Dorsolateral prefrontal cortex (tissue), 120 donors: ENCODE measurements at regions of chr17 and their contacts with region 1.

Region 1: GRCh38 chr17:27654654-27655524 is 23.9 kb downstream of the LGALS9 start:
- DNase-seq: peak; percentile 60 to 82 (median 68)
- H3K4me3 ChIP-seq: no peak overlapping the region
- H3K27ac ChIP-seq: no peak overlapping the region
- H3K27me3 ChIP-seq: no peaks in the 10 kb centered on the region
- CTCF ChIP-seq: peak; percentile 76 to 98 (median 94)

Region 2: DNA sequence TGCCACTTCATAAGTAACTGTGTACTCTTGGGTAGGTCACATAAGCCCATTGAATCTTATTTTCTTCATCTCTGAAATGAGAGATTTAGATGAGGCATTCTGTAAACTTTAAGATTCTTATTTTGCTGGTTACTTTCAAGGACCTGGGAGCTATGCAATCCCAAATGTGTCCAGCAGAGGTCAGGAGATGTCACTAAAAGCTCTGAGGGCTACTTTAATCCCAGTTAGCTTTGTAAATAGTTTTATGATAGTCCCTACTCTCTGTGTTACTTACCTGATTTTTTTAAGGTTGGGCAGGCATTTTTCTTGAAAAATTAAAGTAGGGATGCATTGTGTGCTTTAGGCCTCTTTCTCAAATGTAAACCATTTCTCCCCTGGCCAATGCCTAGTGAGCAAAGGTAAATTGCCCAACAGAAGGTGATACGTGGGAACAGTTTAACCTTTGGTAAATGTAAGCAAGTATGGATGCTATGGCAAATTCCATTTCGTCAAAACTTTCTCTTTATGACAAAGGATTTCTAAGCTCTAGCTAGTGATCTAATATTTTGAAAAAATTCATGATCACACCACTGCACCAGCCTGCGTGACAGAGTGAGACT is 418.1 kb before region 1 on chr17:
- intact Hi-C with region 1: loop called in 1 of 2 experiments (anchors 5 kb)
- DNase-seq: peak in 8 of 10 donors; percentile 34 to 88 (median 68)
- H3K4me3 ChIP-seq: no peak overlapping the region
- H3K27ac ChIP-seq: no peak overlapping the region
- H3K27me3 ChIP-seq: no peaks in the 10 kb centered on the region
- CTCF ChIP-seq: peak; percentile 84 to 99 (median 95)

Region 3: DNA sequence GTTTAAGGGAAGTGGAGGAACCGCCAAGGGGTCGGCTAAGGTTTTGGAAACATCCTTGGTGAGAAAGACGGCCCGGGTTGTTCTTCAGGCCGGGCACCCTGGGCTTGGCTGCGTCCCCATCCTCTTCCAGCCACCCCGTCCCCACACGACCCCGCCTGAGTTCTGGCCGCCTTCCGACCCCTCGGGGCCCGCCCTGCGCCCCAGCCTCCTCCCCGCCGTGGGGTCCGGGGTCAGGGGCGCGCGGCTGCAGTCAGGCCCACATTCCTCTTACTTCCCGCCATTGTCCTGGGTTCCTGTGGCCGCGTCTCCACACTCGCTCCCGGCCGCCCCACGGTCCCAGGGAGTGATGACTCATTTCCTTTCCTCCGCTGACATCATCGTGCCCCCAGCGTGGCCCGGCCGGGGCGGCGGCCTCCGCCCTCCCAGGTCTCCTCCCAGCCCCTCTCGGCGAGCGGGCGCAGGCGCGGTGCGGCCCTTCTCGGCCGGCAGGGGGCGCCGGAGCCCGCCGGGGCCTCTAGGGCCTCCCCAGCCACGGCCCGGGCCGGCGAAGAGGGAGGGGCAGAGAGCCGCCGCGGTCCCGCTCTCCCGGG is 301.3 kb before region 1 on chr17:
- intact Hi-C with region 1: loop called in 1 of 2 experiments (anchors 5 kb)
- DNase-seq: peak; percentile 62 to 90 (median 78)
- H3K4me3 ChIP-seq: peak overlapping the region; percentile 51 to 89 (median 73)
- H3K27ac ChIP-seq: peak overlapping the region; percentile 37 to 98 (median 91)
- H3K27me3 ChIP-seq: no peaks in the 10 kb centered on the region
- CTCF ChIP-seq: peak; percentile 38 to 99 (median 87)

Region 4: GRCh38 chr17:27609611-27610303 is 45.1 kb before region 1 on chr17:
- intact Hi-C with region 1: loop called (anchors 1 to 2 kb)
- DNase-seq: peak in 6 of 10 donors; percentile 27 to 72 (median 62)
- H3K4me3 ChIP-seq: peak overlapping the region in 30 of 59 donors; percentile 0 to 47 (median 18)
- H3K27ac ChIP-seq: peak overlapping the region in 25 of 59 donors; percentile 1 to 76 (median 40)
- H3K27me3 ChIP-seq: no peaks in the 10 kb centered on the region
- CTCF ChIP-seq: peak in 55 of 56 donors; percentile 30 to 77 (median 65)

Region 5: GRCh38 chr17:27760069-27760885 is 105.4 kb after region 1 on chr17:
- intact Hi-C with region 1: loop called (anchors 2 kb)
- DNase-seq: peak in 8 of 10 donors; percentile 57 to 79 (median 72)
- H3K4me3 ChIP-seq: no peak overlapping the region
- H3K27ac ChIP-seq: no peak overlapping the region
- H3K27me3 ChIP-seq: no peaks in the 10 kb centered on the region
- CTCF ChIP-seq: peak; percentile 64 to 97 (median 92)

Region 6: DNA sequence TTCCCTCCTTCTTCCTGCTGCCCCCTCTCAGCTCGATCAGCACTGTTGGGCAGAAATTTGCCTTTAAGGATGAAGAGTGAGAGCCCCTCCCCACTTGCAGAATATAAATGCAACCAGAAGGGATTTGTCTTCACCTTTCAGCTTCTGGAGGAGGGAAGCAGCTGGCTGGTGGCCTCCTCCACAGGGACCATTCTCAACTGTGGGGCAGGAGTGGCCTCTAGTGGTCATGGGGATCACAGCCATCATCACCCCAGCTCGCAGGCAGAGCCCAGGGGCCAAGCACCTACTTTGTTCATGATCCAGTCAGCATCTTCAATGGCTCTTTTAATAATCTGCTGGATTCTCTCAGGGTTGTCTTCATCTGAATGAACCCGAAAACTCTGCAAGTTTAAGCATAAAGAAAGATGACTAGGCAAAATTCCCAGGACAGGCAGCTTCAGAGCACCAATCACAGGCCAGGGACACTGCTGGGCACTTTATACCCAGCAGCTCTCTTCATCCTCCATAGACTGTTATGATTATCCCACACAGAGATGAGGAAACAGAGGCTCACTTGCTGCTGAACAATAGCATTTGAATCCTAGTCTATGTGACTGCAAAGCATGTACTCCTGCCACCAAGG is 225.2 kb after region 1 on chr17:
- intact Hi-C with region 1: loop called (anchors 2 to 10 kb)
- DNase-seq: peak; percentile 68 to 86 (median 80)
- H3K4me3 ChIP-seq: no peak overlapping the region
- H3K27ac ChIP-seq: peak overlapping the region in 54 of 59 donors; percentile 24 to 87 (median 70)
- H3K27me3 ChIP-seq: no peaks in the 10 kb centered on the region
- CTCF ChIP-seq: peak; percentile 40 to 97 (median 87)